AG04450 (cell line): ENCODE measurements at regions of chr4 and their contacts with region 1.

Region 1: DNA sequence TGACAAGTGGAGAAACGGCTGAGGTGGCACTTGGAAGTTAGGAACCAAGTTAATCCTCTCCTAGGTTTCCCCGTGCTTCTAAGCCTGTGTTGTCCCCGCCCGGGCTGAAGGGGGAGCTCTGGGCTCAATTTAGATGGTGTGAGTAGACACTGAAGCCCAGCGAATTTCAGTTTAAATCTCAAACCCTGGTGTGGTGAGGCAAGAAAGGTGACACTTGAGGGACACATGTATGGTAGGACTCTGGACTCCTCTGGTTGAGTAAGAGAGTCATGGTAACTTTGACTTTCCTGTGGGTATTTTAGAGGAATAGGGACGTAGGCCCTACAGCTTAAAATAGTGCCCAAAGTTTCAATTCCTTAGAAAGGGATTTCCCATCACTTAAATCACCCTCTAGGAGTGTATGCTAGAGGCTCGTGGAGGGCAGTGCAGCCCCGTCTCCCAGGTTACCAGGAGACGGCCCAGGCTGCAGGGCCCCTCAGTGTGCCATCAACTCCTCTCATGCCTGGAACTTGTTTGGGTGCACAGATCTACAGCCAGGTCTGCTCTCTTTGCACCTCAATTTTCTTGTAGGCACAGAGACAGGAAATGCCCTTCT is 24.0 kb downstream of the HAND2 start:
- DNase-seq: no peak
- H3K4me3 ChIP-seq: no peak overlapping the region
- H3K27ac ChIP-seq: no peak overlapping the region
- H3K27me3 ChIP-seq: peaks cover 70% of the 10 kb centered on the region
- CTCF ChIP-seq: peak; percentile 85

Region 2: DNA sequence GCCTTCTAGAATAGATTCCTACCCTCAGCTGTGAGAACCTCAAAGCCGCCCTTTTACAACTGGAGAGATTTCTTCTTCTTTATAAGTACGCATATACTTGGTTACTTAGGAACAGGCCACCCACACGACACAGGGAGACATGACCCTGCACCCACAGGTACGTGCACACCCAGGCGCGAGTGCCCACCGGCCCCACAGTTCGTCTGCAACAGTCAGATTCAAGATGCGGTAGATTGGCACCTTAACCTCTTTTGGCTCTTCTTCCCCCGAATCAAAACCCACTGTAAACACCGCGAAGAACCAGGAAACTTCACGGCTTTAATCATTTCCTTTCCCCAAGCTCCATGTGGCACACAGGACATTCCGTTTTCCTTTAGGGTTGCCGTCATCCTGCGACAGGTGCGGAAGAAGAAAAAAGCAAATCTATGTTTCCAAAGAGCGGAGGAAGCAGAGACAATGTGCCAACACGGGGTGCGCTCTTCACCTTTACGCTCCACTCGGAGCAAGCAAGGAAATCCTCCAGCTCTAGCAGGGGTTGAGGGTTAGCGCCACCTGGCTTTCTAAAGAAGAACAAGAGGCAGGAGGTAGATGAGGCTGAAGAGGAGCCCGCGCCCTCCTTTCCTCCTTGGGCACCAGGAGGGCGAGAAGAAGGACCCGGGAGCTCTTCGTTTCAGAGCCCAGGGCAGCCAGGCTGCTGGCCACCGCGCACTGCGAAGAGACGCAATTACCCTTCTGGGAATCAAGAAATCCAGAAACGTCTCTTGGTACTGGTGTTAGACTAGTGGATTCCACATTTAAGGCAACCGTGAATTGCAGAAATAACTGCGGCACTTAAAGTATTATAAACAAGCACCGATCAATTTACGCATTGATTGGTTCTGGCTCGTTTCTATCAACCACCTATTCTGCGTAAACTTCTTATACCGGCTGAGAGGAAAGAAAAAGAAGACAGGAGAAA is 11.7 kb before region 1 on chr4:
- CTCF ChIA-PET with region 1: interaction called, 18 read pairs
- POLR2A ChIA-PET with region 1: no interaction called
- DNase-seq: peak; percentile 41
- H3K4me3 ChIP-seq: peak overlapping the region; percentile 52
- H3K27ac ChIP-seq: no peak overlapping the region
- H3K27me3 ChIP-seq: peaks cover 20% of the 10 kb centered on the region
- CTCF ChIP-seq: peak; percentile 88

Region 3: GRCh38 chr4:173522123-173522950 is 16.3 kb after region 1 on chr4:
- CTCF ChIA-PET with region 1: interaction called, 10 read pairs
- POLR2A ChIA-PET with region 1: no interaction called
- DNase-seq: peak; percentile 59
- H3K4me3 ChIP-seq: peak overlapping the region; percentile 66
- H3K27ac ChIP-seq: peak overlapping the region; percentile 61
- H3K27me3 ChIP-seq: peaks cover 74% of the 10 kb centered on the region
- CTCF ChIP-seq: peak; percentile 31; the same call in 1 of the 2 replicates

Region 4: GRCh38 chr4:173990126-173990868 is 484.3 kb after region 1 on chr4:
- CTCF ChIA-PET with region 1: interaction called, 52 read pairs
- POLR2A ChIA-PET with region 1: no interaction called
- DNase-seq: no peak
- H3K4me3 ChIP-seq: no peak overlapping the region
- H3K27ac ChIP-seq: no peak overlapping the region
- H3K27me3 ChIP-seq: no peaks in the 10 kb centered on the region
- CTCF ChIP-seq: peak; percentile 80

Region 5: GRCh38 chr4:174120446-174121295 is 614.6 kb after region 1 on chr4:
- CTCF ChIA-PET with region 1: interaction called, 31 read pairs
- POLR2A ChIA-PET with region 1: no interaction called
- DNase-seq: peak; percentile 27
- H3K4me3 ChIP-seq: peak overlapping the region; percentile 56
- H3K27ac ChIP-seq: no peak overlapping the region
- H3K27me3 ChIP-seq: no peaks in the 10 kb centered on the region
- CTCF ChIP-seq: peak; percentile 55